Naive thymus-derived CD8-positive, alpha-beta T cell (primary cell): ENCODE measurements at regions of chr2 and their contacts with region 1.

Region 1: GRCh38 chr2:205130111-205130829 is 552.0 kb upstream of the NRP2 start:
- DNase-seq: peak in 2 of 10 donors; percentile 33 to 39
- ATAC-seq: peak; percentile 30 to 49
- H3K4me3 Mint-ChIP-seq: peak overlapping the region in 6 of 10 donors; percentile 19 to 49 (median 32)
- H3K27ac Mint-ChIP-seq: peak overlapping the region in 8 of 10 donors; percentile 38 to 95 (median 79)
- H3K4me1 Mint-ChIP-seq: peaks cover 13 to 20% (median 19%) of the 10 kb centered on the region in 4 donors
- H3K27me3 Mint-ChIP-seq: no peaks in the 10 kb centered on the region

Region 2: GRCh38 chr2:204967199-204967960 is 162.9 kb before region 1 on chr2:
- POLR2A ChIA-PET with region 1: interaction called, 11 read pairs
- DNase-seq: peak; percentile 13 to 78 (median 45)
- ATAC-seq: peak; percentile 74 to 78
- H3K4me3 Mint-ChIP-seq: peak overlapping the region; percentile 40 to 82 (median 68)
- H3K27ac Mint-ChIP-seq: peak overlapping the region; percentile 93 to 100 (median 97)
- H3K4me1 Mint-ChIP-seq: peaks cover 28 to 66% (median 53%) of the 10 kb centered on the region in 4 donors
- H3K27me3 Mint-ChIP-seq: no peaks in the 10 kb centered on the region

Region 3: GRCh38 chr2:205076405-205076804 is 53.9 kb before region 1 on chr2:
- POLR2A ChIA-PET with region 1: interaction called, 10 read pairs
- DNase-seq: peak in 2 of 10 donors; percentile 1 to 3
- ATAC-seq: peak; percentile 24 to 40
- H3K4me3 Mint-ChIP-seq: peak overlapping the region; percentile 29 to 84 (median 72)
- H3K27ac Mint-ChIP-seq: peak overlapping the region; percentile 86 to 98 (median 93)
- H3K4me1 Mint-ChIP-seq: peaks cover 18 to 53% (median 46%) of the 10 kb centered on the region in 4 donors
- H3K27me3 Mint-ChIP-seq: no peaks in the 10 kb centered on the region